MCF 10A (cell line): ENCODE measurements at regions of chr14 and their contacts with region 1.

Region 1: DNA sequence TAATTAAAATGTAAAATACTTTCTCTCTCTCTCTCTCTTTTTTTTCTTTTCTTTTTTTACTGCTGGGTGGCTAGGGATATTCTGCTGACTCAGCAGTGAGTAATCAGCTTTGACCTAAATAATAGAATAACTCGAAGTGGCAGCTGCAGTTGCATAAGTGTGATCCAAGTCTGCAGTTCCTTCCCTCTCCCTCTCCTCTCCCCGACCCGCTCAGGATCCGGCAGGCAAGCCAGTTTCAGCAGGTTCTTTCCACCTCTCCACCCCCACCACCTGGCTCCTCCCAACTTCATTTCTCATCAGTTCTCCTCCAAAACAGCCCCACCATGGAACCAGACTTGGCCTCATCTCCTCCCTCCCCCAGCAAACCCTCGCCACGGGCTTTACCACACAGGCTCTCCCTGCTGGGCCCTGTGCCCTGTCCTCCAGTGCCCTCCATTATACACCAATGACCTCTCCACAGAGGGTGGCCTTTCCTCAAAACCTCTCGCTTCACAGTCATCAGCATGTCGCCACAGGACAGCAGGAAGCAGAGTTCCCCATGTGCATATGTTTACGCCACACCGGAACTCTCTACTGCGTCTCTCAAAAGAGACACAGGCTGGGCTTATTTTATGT is 22.4 kb downstream of the SLC7A8 start:
- DNase-seq: peak; percentile 82
- H3K4me3 Mint-ChIP-seq: peak overlapping the region; percentile 37
- H3K27ac Mint-ChIP-seq: no peak overlapping the region
- H3K4me1 Mint-ChIP-seq: peaks cover 19% of the 10 kb centered on the region
- H3K27me3 Mint-ChIP-seq: no peaks in the 10 kb centered on the region
- CTCF ChIP-seq: no peak

Region 2: DNA sequence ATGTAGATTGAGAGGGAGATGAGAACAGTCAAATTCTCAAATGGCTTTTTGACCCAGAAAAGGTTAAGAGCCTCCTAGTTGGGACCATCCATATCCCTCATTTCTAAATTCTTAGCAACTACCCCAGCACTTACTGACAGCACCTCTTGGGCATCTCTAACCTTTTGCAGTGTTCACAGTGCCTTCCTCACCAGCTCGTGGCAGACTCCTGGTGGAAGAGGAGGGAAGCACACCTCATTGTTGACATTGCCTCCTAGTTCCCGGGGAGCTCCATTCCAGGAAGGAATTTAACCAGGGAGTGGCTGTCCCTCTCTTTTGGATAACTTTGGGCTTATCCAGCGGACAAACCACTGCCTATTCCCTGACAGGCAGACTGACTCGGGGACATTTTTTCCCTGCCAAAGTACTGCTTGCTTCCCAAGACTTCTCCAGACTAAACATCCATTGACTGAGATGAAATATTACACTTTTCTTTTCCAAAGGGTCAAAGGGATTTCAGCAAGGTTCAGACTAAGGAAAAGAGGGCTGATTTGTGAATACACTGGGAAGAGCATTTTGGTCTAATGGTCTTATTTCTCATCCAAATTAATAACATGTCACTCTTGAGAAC is 507.9 kb before region 1 on chr14:
- CTCF ChIA-PET with region 1: no interaction called
- POLR2A ChIA-PET with region 1: no interaction called
- intact Hi-C with region 1: no loop called
- DNase-seq: peak; percentile 87
- H3K4me3 Mint-ChIP-seq: no peak overlapping the region
- H3K27ac Mint-ChIP-seq: no peak overlapping the region
- H3K4me1 Mint-ChIP-seq: peaks cover 10% of the 10 kb centered on the region
- H3K27me3 Mint-ChIP-seq: no peaks in the 10 kb centered on the region
- CTCF ChIP-seq: peak; percentile 84

Region 3: GRCh38 chr14:23113431-23114119 is 47.5 kb before region 1 on chr14:
- CTCF ChIA-PET with region 1: no interaction called
- POLR2A ChIA-PET with region 1: no interaction called
- intact Hi-C with region 1: no loop called
- DNase-seq: no peak
- H3K4me3 Mint-ChIP-seq: no peak overlapping the region
- H3K27ac Mint-ChIP-seq: no peak overlapping the region
- H3K4me1 Mint-ChIP-seq: peaks cover 11% of the 10 kb centered on the region
- H3K27me3 Mint-ChIP-seq: no peaks in the 10 kb centered on the region
- CTCF ChIP-seq: no peak

Region 4: DNA sequence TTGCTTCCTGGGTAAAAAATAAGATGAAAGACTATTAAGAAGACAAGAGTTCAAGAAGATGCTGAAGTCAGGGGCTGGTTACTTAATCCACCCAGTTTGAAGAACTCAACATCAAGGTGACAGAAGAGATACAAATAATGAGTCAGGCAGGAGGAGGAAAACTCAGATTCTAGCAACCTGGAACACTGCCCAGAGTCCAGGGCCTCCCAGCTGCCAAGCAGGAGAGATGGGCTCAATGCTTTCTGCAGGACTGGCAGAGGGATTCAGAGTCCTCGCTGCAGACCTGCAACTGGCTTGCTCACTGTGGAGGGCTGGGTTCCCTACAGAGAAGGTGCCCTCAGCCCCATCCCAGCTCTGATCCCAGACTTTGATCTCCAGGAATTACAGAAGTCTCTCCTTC is 13.4 kb before region 1 on chr14:
- CTCF ChIA-PET with region 1: interaction called, 8 read pairs
- POLR2A ChIA-PET with region 1: interaction called, 32 read pairs
- intact Hi-C with region 1: no loop called
- DNase-seq: peak; percentile 83
- H3K4me3 Mint-ChIP-seq: no peak overlapping the region
- H3K27ac Mint-ChIP-seq: no peak overlapping the region
- H3K4me1 Mint-ChIP-seq: peaks cover 39% of the 10 kb centered on the region
- H3K27me3 Mint-ChIP-seq: no peaks in the 10 kb centered on the region
- CTCF ChIP-seq: no peak

Region 5: GRCh38 chr14:23174276-23175184 is 13.5 kb after region 1 on chr14:
- CTCF ChIA-PET with region 1: interaction called, 5 read pairs
- POLR2A ChIA-PET with region 1: interaction called, 57 read pairs
- intact Hi-C with region 1: no loop called
- DNase-seq: peak; percentile 65
- H3K4me3 Mint-ChIP-seq: no peak overlapping the region
- H3K27ac Mint-ChIP-seq: no peak overlapping the region
- H3K4me1 Mint-ChIP-seq: peaks cover 39% of the 10 kb centered on the region
- H3K27me3 Mint-ChIP-seq: no peaks in the 10 kb centered on the region
- CTCF ChIP-seq: no peak